K562 (cell line): ENCODE measurements at regions of chr3 and their contacts with region 1.

Region 1: DNA sequence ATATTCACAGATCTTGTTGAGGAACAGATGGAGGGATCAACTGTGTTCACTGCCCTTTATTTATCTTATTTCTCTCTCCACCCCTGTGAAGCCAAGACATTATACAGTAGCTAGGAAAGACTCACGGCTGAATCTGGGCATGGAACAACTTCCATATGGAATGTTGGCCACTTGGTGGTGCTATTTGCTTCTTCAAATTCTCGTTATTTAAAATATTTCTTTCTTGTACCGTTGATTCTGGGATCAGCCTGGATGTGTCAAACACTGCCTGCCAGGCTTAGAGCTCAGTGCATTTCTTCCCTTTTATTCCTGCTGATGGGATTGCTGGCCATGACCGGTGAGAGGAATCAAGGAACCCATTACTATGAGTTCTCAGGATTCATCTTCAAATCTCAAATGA is 17.5 kb upstream of the GASK1A start:
- DNase-seq: peak; percentile 28 to 59 (median 42)
- ATAC-seq: peak; percentile 81
- H3K4me3 ChIP-seq: no peak overlapping the region
- H3K27ac ChIP-seq: no peak overlapping the region
- H3K4me1 ChIP-seq: no peaks in the 10 kb centered on the region
- H3K27me3 ChIP-seq: no peaks in the 10 kb centered on the region
- CTCF ChIP-seq: peak; percentile 64 to 81 (median 75)
- EP300 ChIP-seq: no peak
- POLR2A ChIP-seq: no peak
- RAD21 ChIP-seq: peak; percentile 80 to 81

Region 2: GRCh38 chr3:43071313-43071893 is 109.8 kb after region 1 on chr3:
- CTCF ChIA-PET with region 1: no interaction called
- POLR2A ChIA-PET with region 1: interaction called, 3 read pairs
- in situ Hi-C with region 1: no loop called
- intact Hi-C with region 1: loop called (anchors 10 kb)
- DNase-seq: peak; percentile 59 to 72 (median 66)
- ATAC-seq: peak; percentile 89
- H3K4me3 ChIP-seq: no peak overlapping the region
- H3K27ac ChIP-seq: no peak overlapping the region
- H3K4me1 ChIP-seq: no peaks in the 10 kb centered on the region
- H3K27me3 ChIP-seq: peaks cover 0 to 9% of the 10 kb centered on the region in 2 experiments; a peak in 2 of 5 replicates
- CTCF ChIP-seq: peak; percentile 71 to 91 (median 76)
- EP300 ChIP-seq: no peak
- POLR2A ChIP-seq: no peak
- RAD21 ChIP-seq: peak; percentile 15 to 58; a peak in 2 of 4 replicates

Region 3: GRCh38 chr3:43113671-43114070 is 152.0 kb after region 1 on chr3:
- CTCF ChIA-PET with region 1: interaction called, 4 read pairs
- POLR2A ChIA-PET with region 1: no interaction called
- in situ Hi-C with region 1: no loop called
- intact Hi-C with region 1: loop called (anchors 1 kb)
- DNase-seq: no peak
- ATAC-seq: no peak
- H3K4me3 ChIP-seq: no peak overlapping the region
- H3K27ac ChIP-seq: no peak overlapping the region
- H3K4me1 ChIP-seq: no peaks in the 10 kb centered on the region
- H3K27me3 ChIP-seq: peaks cover 7 to 12% of the 10 kb centered on the region in 2 experiments; a peak in 4 of 5 replicates
- CTCF ChIP-seq: no peak
- EP300 ChIP-seq: no peak
- POLR2A ChIP-seq: no peak
- RAD21 ChIP-seq: no peak

Region 4: DNA sequence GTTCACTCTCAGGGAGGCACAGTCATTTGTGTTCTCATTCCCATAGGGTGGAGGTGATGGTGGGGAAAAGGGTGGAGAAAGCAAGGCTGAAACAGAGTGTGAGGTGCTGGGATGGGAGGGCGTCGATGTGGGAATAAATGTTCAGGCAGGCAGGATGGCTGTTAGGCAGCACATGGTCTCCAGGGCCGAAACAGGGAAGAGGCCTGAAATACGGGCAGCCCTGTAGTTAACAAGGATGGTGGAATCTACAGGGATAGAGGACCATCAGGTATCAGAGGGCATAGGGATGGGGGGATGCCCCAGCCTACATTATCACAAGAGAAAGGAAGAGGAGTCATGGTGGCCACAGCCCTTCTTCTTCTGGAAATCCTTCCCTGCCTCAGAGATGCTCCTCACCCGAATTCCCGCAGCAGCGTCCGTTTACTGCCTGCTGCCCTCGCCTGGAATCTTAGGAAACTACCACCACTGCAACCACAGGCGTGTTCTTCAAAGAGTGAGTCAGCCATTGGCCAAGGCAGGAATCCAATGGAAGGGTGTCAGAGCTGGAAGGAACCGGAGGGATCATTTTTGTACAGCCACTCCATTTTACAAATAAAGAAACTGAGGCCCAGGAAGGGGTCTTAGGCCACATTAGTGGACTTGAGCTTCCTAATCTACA is 194.0 kb after region 1 on chr3:
- CTCF ChIA-PET with region 1: interaction called, 27 read pairs
- POLR2A ChIA-PET with region 1: no interaction called
- in situ Hi-C with region 1: loop called (anchors 10 kb)
- intact Hi-C with region 1: loop called (anchors 2 kb)
- DNase-seq: peak; percentile 40 to 56 (median 46)
- ATAC-seq: peak; percentile 90
- H3K4me3 ChIP-seq: no peak overlapping the region
- H3K27ac ChIP-seq: no peak overlapping the region
- H3K4me1 ChIP-seq: no peaks in the 10 kb centered on the region
- H3K27me3 ChIP-seq: peaks cover 6 to 45% of the 10 kb centered on the region in 2 experiments; a peak in 4 of 5 replicates
- CTCF ChIP-seq: peak; percentile 62 to 75 (median 68)
- EP300 ChIP-seq: no peak
- POLR2A ChIP-seq: no peak
- RAD21 ChIP-seq: peak; percentile 72 to 78

Region 5: DNA sequence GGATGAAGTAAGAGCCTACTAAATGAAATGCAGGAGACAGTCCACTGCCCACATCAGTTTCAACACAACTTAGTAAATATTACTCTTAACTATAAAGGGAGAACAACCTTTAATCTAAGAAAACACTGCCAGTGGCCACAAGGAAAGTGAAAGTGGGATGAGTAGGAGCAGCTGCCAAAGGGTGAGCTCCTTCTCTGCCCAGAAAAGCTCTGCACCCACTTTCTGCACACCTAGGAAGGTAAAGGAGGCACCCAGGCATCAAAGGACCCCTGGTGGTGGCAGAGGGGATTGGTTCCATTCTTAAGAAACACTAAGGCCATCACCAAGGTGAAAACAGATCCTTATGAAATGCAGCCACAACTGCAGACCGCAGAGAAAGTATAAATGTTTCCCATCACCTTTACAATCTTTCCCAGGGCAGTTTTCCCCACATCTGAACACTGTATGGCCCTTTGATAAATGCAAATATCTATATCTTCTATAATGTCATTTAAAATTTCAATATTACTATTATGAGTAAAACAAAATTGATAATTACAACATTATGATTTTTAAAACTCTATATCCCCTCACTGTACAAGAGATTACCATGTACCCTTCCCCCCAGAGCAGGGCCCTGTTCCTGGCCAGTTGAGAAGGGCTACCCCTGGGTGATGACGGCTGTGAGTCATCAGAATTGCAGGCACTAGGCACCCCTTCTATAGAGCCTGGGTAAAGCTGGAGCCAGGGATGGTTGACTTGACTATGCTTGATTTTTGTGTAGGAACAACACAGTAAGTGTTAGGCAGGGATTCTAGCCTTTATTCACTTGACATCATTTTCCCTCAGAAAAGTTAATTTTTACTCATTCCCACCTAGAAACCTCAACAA is 416.7 kb after region 1 on chr3:
- CTCF ChIA-PET with region 1: no interaction called
- POLR2A ChIA-PET with region 1: no interaction called
- in situ Hi-C with region 1: no loop called
- intact Hi-C with region 1: loop called (anchors 2 kb)
- DNase-seq: peak; percentile 64 to 73 (median 70)
- ATAC-seq: peak; percentile 97
- H3K4me3 ChIP-seq: no peak overlapping the region
- H3K27ac ChIP-seq: no peak overlapping the region
- H3K4me1 ChIP-seq: no peaks in the 10 kb centered on the region
- H3K27me3 ChIP-seq: no peaks in the 10 kb centered on the region
- CTCF ChIP-seq: peak; percentile 76 to 82 (median 77)
- EP300 ChIP-seq: no peak
- POLR2A ChIP-seq: no peak
- RAD21 ChIP-seq: peak; percentile 39 to 75

Region 6: DNA sequence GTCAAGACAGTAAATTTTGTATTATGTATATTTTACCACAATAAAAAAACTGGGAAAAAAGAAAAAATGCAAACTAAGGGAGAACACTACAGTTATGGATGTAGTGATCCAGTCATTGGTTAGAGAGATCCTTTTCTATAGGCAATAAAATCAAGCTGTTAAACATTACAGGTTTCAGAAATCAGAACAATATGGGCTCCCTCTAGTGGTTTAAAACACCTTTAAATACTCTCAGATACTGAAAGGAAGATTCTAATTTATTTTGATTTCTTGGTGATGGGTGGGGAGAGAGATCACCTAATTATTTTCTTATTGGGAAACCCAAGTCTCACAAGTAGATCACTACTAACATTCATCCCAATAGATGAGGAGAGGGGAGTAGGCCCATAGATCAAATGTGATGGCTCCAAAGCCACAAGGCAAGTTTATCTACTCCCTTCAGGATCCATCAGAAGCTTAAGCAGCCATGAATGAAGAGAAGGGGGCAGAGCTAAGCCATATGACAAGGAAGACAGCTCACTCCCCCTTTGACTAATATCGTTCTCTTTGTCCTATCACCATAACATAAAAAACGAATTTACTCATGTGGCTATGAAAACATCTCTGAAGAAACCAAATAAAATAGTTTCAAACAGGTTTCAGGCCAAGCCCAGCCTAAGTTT is 541.6 kb after region 1 on chr3:
- CTCF ChIA-PET with region 1: no interaction called
- POLR2A ChIA-PET with region 1: no interaction called
- in situ Hi-C with region 1: no loop called
- intact Hi-C with region 1: loop called (anchors 10 kb)
- DNase-seq: peak in 1 of 4 experiments; percentile 54
- ATAC-seq: peak; percentile 76
- H3K4me3 ChIP-seq: no peak overlapping the region
- H3K27ac ChIP-seq: no peak overlapping the region
- H3K4me1 ChIP-seq: peaks cover 8 to 23% of the 10 kb centered on the region in 2 experiments; a peak in 3 of 5 replicates
- H3K27me3 ChIP-seq: no peaks in the 10 kb centered on the region
- CTCF ChIP-seq: peak in 2 of 3 experiments; percentile 29 to 70; a peak in 3 of 6 replicates
- EP300 ChIP-seq: no peak
- POLR2A ChIP-seq: no peak
- RAD21 ChIP-seq: peak; percentile 48 to 71

Region 7: DNA sequence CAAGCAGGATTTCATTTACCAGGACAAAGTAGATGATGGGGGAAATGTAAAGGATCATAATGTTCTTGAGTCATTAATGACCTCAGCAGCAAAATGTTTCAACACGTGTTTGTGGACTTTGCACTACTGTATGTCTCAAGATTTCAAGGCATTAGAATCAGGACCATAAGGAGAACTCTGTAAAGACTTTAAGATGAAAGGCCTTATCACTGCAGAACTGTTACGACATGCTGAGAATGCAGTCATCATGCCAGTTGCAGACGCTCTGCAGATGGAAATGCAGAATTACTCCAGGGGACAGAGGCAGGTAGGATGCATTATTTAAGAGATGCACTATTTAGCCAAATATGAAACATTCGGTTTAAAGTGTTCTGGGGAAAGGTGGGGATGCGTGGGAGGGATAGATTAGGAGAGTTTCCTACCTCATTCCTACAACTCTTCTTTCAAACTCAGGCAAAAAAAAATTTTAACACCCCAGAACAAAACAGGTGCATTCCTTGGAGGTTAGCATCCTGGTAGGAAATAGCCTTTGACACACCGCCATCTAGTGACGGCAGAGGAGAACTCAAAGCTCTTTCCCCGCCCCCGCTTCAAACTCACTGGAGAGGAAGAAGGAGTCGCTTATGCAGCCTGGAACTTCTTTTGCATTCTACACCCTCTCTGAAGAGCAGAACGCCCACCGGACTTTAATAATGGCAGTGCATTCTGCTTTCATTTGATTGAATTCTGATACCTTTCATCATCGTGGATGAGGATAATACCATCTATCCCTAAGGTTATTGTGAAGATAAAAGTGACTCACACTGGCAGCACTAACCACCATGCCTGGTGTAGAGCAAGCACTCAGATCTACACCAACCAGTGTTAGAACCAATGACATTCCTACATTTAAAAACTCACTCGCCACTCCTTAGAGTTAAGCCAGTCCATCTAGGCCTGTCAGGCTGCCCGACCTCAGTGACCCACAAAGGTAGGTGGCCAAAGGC is 1236.9 kb after region 1 on chr3:
- CTCF ChIA-PET with region 1: no interaction called
- POLR2A ChIA-PET with region 1: no interaction called
- in situ Hi-C with region 1: no loop called
- intact Hi-C with region 1: loop called (anchors 10 kb)
- DNase-seq: peak; percentile 62 to 84 (median 72)
- ATAC-seq: peak; percentile 99
- H3K4me3 ChIP-seq: no peak overlapping the region
- H3K27ac ChIP-seq: no peak overlapping the region
- H3K4me1 ChIP-seq: no peaks in the 10 kb centered on the region; a peak in 1 of 5 replicates
- H3K27me3 ChIP-seq: peaks cover 0 to 7% of the 10 kb centered on the region in 2 experiments; a peak in 2 of 5 replicates
- CTCF ChIP-seq: peak; percentile 84 to 95 (median 88)
- EP300 ChIP-seq: no peak
- POLR2A ChIP-seq: no peak
- RAD21 ChIP-seq: peak; percentile 90 to 92